Heart left ventricle (tissue), 16 donors: ENCODE measurements at regions of chr10 and their contacts with region 1.

Region 1: DNA sequence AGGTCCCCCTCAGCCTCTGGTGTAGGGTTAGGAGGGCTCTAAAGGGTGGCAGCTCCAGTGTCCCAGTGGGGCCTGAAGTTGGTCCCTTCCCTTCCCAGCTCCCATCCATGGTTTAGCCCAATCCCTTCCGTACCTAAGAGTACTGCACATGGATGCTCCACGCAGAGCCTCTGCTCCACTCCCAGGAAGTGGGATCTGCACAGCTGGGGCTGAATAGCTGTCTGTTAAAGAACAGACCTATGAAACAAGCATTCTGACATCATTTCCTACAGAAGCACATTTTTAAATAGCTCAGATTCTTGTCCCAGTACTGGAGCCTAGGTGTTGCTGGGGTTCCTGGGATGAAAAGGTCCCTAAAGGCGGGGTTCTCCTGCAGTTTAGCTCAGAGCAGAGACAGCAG is 135.9 kb downstream of the ZMYND11 start:
- DNase-seq: no peak
- ATAC-seq: no peak
- H3K4me3 ChIP-seq: no peak overlapping the region
- H3K27ac ChIP-seq: no peak overlapping the region
- H3K4me1 ChIP-seq: no peaks in the 10 kb centered on the region
- H3K27me3 ChIP-seq: no peaks in the 10 kb centered on the region
- CTCF ChIP-seq: no peak
- POLR2A ChIP-seq: no peak

Region 2: DNA sequence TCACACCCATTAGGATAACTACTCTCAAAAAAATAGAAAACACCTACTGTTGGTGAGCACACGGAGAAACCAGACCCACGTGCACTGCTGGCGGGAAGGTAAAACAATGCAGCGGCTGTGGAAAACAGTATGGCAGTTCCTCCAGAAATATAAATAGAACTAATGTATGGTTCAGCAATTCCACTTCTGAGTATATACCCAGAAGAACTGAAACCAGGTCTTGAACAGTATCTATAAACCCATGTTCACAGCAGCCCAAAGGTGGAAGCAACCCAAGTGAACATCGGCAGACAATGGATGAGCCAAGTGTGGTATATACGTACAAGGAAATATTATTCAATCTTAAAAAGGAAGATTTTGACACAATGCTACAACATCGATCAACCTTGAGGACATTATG is 28.8 kb after region 1 on chr10:
- intact Hi-C with region 1: loop called in 1 of 10 experiments (anchors 2 kb)
- DNase-seq: no peak
- ATAC-seq: no peak
- H3K4me3 ChIP-seq: no peak overlapping the region
- H3K27ac ChIP-seq: no peak overlapping the region
- H3K4me1 ChIP-seq: peaks cover 0 to 11% (median 6%) of the 10 kb centered on the region in 12 donors
- H3K27me3 ChIP-seq: no peaks in the 10 kb centered on the region
- CTCF ChIP-seq: no peak
- POLR2A ChIP-seq: no peak